ENCODE measurements at regions of chr5 and their contacts with region 1.

Region 1: DNA sequence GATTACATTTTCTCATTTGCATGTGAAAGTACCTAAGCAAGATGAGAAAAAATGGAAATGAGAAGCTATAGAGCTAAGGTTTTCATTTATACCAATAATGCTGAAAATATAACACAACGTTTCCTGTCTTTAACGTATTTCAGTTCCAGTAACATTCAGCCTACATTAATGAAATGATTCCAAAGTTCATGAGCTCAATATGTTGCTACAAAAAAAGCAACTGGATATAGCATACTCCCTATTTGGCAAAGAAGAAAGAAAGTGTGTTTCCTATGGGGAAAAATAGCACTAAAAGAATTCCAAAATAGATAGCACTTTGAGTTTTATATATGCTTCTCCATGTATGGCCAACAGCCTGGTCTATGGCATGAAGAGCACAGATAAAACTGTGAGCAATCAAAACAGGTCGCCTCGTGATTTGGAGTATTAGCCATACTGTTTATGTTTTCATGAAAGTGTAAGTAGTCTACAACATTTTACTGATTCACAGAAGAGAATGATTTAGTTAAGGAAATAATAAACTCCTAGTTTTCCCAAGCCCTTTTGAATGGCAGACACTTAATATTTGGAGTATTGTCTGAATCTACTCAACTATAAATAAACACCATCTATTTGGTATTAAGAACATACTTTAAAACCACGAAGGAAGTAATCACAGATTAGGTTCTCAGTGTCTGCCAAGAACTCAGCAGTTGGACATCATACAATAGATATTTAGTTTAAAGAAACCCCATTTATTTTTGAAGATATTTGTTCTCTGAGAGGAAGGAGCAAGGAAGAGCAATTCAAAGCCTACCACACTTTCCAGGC is 258.7 kb upstream of the RASA1 start:
- DNase-seq: no peak
- ATAC-seq: no peak
- H3K4me3 ChIP-seq: no peak overlapping the region
- H3K4me3 Mint-ChIP-seq: no peak overlapping the region
- H3K27ac ChIP-seq: no peak overlapping the region
- H3K27ac Mint-ChIP-seq: no peak overlapping the region
- H3K4me1 ChIP-seq: no peaks in the 10 kb centered on the region
- H3K4me1 Mint-ChIP-seq: no peaks in the 10 kb centered on the region
- H3K27me3 ChIP-seq: no peaks in the 10 kb centered on the region
- H3K27me3 Mint-ChIP-seq: no peaks in the 10 kb centered on the region
- CTCF ChIP-seq: no peak

Region 2: DNA sequence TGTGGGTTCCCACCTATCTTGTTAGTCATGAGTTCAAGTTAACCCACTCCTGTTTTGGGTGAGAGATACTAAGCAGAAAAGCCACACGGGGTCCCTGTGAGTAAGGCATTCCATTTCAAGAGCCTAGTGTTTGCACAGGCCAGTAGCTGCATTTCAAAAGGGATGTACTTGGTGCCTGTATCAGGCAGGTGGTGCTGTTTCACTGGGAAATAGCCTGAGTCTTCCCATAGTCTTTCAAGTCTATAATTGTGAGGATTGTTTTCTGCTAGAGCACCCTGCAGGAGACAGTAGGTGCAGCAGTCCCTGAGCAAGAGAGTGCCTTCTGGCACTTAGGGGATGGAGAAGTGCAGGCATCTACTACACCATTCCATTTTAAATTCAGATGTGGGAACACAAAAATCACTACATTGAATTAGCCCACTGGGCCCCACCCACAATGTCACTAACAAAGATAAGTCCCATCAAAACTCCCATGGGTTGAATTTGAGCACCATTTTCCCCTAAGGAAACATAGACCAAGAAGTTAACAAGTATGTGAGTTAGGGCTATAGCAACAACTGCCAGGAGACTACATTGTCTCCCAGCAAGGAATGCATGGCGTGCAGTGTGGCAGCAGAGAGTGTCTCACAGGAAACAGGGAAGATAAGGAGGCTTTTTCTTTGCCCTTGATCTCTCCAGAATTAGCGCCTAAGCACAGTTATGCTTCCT is 128.0 kb before region 1 on chr5:
- CTCF ChIA-PET with region 1: interaction called, 6 read pairs
- POLR2A ChIA-PET with region 1: no interaction called
- intact Hi-C with region 1: loop called (anchors 2 kb)
- DNase-seq: peak; percentile 36
- ATAC-seq: peak; percentile 62
- H3K4me3 ChIP-seq: no peak overlapping the region
- H3K4me3 Mint-ChIP-seq: no peak overlapping the region
- H3K27ac ChIP-seq: no peak overlapping the region
- H3K27ac Mint-ChIP-seq: no peak overlapping the region
- H3K4me1 ChIP-seq: no peaks in the 10 kb centered on the region
- H3K4me1 Mint-ChIP-seq: no peaks in the 10 kb centered on the region
- H3K27me3 ChIP-seq: no peaks in the 10 kb centered on the region
- H3K27me3 Mint-ChIP-seq: no peaks in the 10 kb centered on the region
- CTCF ChIP-seq: peak; percentile 52